Heart left ventricle (tissue), 16 donors: ENCODE measurements at regions of chr16 and their contacts with region 1.

Region 1: GRCh38 chr16:83441517-83441916 is 366.3 kb upstream of the HSBP1 start:
- DNase-seq: no peak
- ATAC-seq: peak in 2 of 4 donors; percentile 60 to 61
- H3K4me3 ChIP-seq: no peak overlapping the region
- H3K27ac ChIP-seq: no peak overlapping the region
- H3K4me1 ChIP-seq: no peaks in the 10 kb centered on the region
- H3K27me3 ChIP-seq: no peaks in the 10 kb centered on the region
- CTCF ChIP-seq: peak in 1 of 12 donors; percentile 12
- POLR2A ChIP-seq: no peak

Region 2: DNA sequence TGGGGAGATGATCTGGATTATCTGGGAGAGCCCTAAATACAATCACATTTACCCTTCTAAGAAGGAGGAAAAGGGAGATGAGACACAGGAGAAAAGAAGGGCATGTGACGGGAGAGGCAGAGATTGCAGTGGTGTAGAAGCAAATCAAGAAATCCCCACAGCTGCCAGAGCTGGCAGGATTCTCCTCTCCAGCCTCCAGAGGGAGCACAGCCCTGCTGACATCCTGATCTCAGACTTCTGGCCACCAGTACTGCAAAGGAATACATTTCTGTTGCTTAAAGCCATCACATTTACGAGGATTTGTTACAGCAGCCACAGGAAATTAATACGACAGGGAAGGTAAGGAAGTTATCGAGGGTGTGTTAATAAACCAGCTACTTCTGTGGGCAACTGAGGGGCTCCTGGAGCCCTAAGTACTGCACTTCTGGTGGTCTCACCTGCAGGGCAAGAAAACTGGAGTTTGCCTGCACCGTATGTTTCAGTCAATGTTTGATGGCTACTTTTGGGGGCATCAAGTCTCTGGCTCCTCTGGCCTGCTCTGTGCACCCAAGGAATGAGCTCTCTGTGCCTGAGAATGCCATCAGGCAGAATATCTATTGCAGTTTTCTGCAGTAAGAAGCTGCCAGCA is 837.6 kb before region 1 on chr16:
- intact Hi-C with region 1: loop called in 7 of 10 experiments (anchors 5 to 10 kb)
- DNase-seq: peak; percentile 45 to 67 (median 52)
- ATAC-seq: peak; percentile 56 to 93 (median 84)
- H3K4me3 ChIP-seq: no peak overlapping the region
- H3K27ac ChIP-seq: no peak overlapping the region
- H3K4me1 ChIP-seq: peaks cover 0 to 6% (median 0%) of the 10 kb centered on the region in 12 donors
- H3K27me3 ChIP-seq: no peaks in the 10 kb centered on the region
- CTCF ChIP-seq: peak; percentile 45 to 83 (median 74)
- POLR2A ChIP-seq: no peak

Region 3: DNA sequence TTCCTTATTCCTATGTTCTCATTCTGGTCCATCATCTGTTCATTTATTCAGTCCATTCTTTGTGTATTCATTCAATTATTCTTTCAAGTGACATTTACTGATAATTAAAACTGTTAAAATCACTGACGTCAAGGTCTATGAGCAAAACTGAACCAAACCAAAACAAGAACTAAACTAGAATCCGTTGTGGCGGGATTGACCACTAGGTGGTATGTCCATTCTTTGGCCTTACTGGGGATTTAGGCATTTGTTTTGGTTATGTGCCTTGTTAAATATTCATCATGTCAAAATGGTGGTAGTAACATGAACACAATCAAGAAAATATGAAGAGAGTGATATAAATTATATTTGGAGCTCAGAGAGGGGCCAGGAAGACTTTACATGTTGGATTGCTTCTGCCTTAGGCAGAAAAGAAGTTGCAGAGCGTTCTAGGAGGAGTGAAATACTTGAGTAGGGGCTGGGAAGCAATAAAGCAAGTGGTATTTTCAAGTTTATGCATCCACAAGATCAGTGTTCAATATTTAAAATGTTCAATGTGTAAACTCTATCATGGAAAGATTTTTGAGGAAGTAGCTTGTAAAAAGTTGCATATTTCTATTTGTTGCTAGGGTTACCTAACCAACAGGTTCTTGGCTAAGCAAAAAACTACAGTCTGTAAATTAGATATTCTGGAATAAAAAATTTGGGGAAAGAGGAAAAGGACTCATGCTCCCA is 685.8 kb before region 1 on chr16:
- intact Hi-C with region 1: loop called in 1 of 10 experiments (anchors 10 kb)
- DNase-seq: no peak
- ATAC-seq: no peak
- H3K4me3 ChIP-seq: no peak overlapping the region
- H3K27ac ChIP-seq: peak overlapping the region in 6 of 12 donors; percentile 1 to 51 (median 36)
- H3K4me1 ChIP-seq: peaks cover 0 to 49% (median 24%) of the 10 kb centered on the region in 12 donors
- H3K27me3 ChIP-seq: no peaks in the 10 kb centered on the region
- CTCF ChIP-seq: peak in 2 of 12 donors; percentile 8 to 15
- POLR2A ChIP-seq: no peak

Region 4: GRCh38 chr16:82874271-82874670 is 567.2 kb before region 1 on chr16:
- intact Hi-C with region 1: loop called in 1 of 10 experiments (anchors 10 kb)
- DNase-seq: peak in 1 of 5 donors; percentile 19
- ATAC-seq: peak in 3 of 4 donors; percentile 49 to 59 (median 50)
- H3K4me3 ChIP-seq: no peak overlapping the region
- H3K27ac ChIP-seq: peak overlapping the region in 4 of 12 donors; percentile 11 to 53 (median 37)
- H3K4me1 ChIP-seq: peaks cover 0 to 17% (median 7%) of the 10 kb centered on the region in 12 donors
- H3K27me3 ChIP-seq: no peaks in the 10 kb centered on the region
- CTCF ChIP-seq: no peak
- POLR2A ChIP-seq: no peak

Region 5: GRCh38 chr16:83200005-83200779 is 241.3 kb before region 1 on chr16:
- intact Hi-C with region 1: loop called in 2 of 10 experiments (anchors 5 to 10 kb)
- DNase-seq: peak in 1 of 5 donors; percentile 29
- ATAC-seq: peak in 3 of 4 donors; percentile 76 to 80 (median 79)
- H3K4me3 ChIP-seq: no peak overlapping the region
- H3K27ac ChIP-seq: no peak overlapping the region
- H3K4me1 ChIP-seq: no peaks in the 10 kb centered on the region
- H3K27me3 ChIP-seq: no peaks in the 10 kb centered on the region
- CTCF ChIP-seq: peak in 7 of 12 donors; percentile 8 to 41 (median 27)
- POLR2A ChIP-seq: no peak

Region 6: DNA sequence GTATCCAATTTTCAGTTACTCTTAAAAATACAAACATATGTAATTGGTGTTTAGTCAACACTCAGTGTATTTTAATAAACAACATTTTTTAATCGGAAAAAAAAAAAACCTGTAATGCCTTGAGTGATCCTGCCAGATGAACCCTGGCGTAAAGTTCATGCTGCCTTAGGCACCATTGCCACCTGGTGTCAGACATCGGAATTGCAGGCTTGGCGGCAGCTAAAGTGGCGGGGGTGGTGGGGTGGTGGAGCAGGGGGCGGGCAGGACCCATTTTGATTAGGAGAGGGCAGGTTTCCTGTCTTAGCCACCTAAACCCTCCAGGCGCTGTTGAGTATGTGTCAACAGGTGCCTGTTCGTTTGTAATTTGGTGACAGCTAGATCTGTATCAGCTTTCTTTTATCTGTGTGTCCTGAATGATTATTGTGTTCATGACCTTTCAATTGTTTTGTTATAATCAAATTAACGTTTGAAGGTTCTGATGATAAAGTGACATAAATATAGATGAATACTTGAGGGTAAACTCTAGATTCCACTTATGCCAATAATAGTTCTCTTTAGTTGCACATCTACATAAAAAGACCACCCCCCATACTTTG is 226.0 kb before region 1 on chr16:
- intact Hi-C with region 1: loop called in 1 of 10 experiments (anchors 10 kb)
- DNase-seq: no peak
- ATAC-seq: no peak
- H3K4me3 ChIP-seq: no peak overlapping the region
- H3K27ac ChIP-seq: no peak overlapping the region
- H3K4me1 ChIP-seq: peaks cover 0 to 8% (median 0%) of the 10 kb centered on the region in 12 donors
- H3K27me3 ChIP-seq: no peaks in the 10 kb centered on the region
- CTCF ChIP-seq: peak; percentile 32 to 59 (median 49)
- POLR2A ChIP-seq: no peak

Region 7: GRCh38 chr16:83420206-83420760 is 21.2 kb before region 1 on chr16:
- intact Hi-C with region 1: no loop called
- DNase-seq: no peak
- ATAC-seq: peak in 1 of 4 donors; percentile 33
- H3K4me3 ChIP-seq: no peak overlapping the region
- H3K27ac ChIP-seq: no peak overlapping the region
- H3K4me1 ChIP-seq: no peaks in the 10 kb centered on the region
- H3K27me3 ChIP-seq: no peaks in the 10 kb centered on the region
- CTCF ChIP-seq: no peak
- POLR2A ChIP-seq: no peak

Region 8: GRCh38 chr16:83482545-83483162 is 41.1 kb after region 1 on chr16:
- intact Hi-C with region 1: no loop called
- DNase-seq: no peak
- ATAC-seq: peak; percentile 79 to 88 (median 84)
- H3K4me3 ChIP-seq: no peak overlapping the region
- H3K27ac ChIP-seq: no peak overlapping the region
- H3K4me1 ChIP-seq: peaks cover 0 to 12% (median 0%) of the 10 kb centered on the region in 12 donors
- H3K27me3 ChIP-seq: no peaks in the 10 kb centered on the region
- CTCF ChIP-seq: no peak
- POLR2A ChIP-seq: no peak